ENCODE measurements at regions of chr14 and their contacts with region 1.

Region 1: DNA sequence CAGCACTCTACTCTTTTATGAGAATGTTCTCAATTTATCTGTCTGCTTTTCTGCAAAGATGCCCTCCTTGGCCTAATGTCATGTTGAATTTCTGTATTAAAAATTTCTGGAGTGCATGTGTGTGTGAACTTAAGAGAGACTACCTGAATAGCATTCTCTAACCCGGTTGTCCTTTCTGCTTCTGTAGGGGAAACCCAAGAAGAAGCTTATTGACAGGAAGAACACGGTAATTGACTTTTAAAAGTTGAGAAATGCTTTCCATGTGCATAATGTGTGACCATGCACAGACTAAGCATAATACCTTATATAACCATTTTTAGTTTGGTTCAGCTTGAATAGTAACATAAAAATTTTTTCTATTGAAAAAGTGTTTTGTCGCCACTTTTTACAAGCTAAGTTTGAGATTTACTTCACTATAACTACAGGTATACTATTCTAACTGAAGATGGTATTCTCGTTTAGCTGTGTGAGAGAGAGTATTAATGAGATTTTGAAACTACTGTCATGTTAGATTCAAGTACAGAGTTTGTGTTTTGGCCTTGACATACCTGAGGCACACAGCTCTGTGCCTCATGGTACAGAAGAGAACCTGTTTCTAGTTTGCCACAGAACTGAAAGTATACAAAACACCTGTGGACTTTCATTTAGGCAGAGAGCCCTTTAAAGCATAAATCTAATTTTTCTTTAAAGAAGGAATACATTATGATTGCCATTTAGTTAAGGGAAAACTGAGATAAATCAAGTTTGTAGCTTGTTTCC is 96.8 kb downstream of the TTLL5 start:
- DNase-seq: no peak
- ATAC-seq: 0 out of 3 replicates have a peak, but pooled peaks have one; percentile 25
- H3K4me3 ChIP-seq: no peak overlapping the region
- H3K27ac ChIP-seq: peak overlapping the region; percentile 22
- H3K4me1 ChIP-seq: peaks cover 11% of the 10 kb centered on the region; the same call in 1 of the 2 replicates
- H3K27me3 ChIP-seq: no peaks in the 10 kb centered on the region
- CTCF ChIP-seq: no peak
- EP300 ChIP-seq: no peak
- POLR2A ChIP-seq: no peak
- RAD21 ChIP-seq: no peak

Region 2: DNA sequence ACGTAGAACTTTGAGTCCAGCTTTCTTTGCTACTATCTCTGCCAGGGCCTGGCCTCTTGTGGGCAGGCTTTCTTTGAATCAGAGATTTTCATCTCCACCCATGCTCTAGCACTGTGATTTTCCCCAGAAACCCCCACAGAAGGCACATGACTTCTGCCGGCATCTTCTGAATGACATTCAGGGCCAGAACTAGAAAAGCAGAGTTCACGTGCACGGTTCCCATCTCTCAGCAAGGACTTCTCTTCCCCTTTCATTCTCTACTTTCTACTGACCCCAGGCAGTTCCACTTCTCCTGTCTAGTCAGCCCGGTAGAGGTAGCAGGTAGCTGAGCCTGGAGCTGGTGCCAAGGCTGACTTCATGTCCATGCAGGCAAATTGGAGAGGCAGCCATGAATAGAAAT is 208.7 kb before region 1 on chr14:
- CTCF ChIA-PET with region 1: no interaction called
- POLR2A ChIA-PET with region 1: no interaction called
- RAD21 ChIA-PET with region 1: no interaction called
- SMC1A ChIA-PET with region 1: no interaction called
- in situ Hi-C with region 1: no loop called
- intact Hi-C with region 1: no loop called
- DNase-seq: peak; percentile 79
- ATAC-seq: peak; percentile 87
- H3K4me3 ChIP-seq: no peak overlapping the region; the same call in 1 of the 2 replicates
- H3K27ac ChIP-seq: peak overlapping the region; percentile 53
- H3K4me1 ChIP-seq: peaks cover 23% of the 10 kb centered on the region
- H3K27me3 ChIP-seq: no peaks in the 10 kb centered on the region
- CTCF ChIP-seq: no peak
- EP300 ChIP-seq: peak in 1 of 2 experiments; percentile 49; a peak in 1 of 4 replicates
- POLR2A ChIP-seq: no peak
- RAD21 ChIP-seq: peak; percentile 7; the same call in 1 of the 2 replicates

Region 3: GRCh38 chr14:75769047-75769685 is 11.3 kb after region 1 on chr14:
- CTCF ChIA-PET with region 1: interaction called, 4 read pairs
- POLR2A ChIA-PET with region 1: interaction called, 3 read pairs
- RAD21 ChIA-PET with region 1: no interaction called
- SMC1A ChIA-PET with region 1: interaction called, 14 read pairs
- in situ Hi-C with region 1: no loop called
- intact Hi-C with region 1: no loop called
- DNase-seq: peak; percentile 19
- ATAC-seq: peak; percentile 93
- H3K4me3 ChIP-seq: no peak overlapping the region
- H3K27ac ChIP-seq: no peak overlapping the region
- H3K4me1 ChIP-seq: no peaks in the 10 kb centered on the region
- H3K27me3 ChIP-seq: no peaks in the 10 kb centered on the region
- CTCF ChIP-seq: no peak
- EP300 ChIP-seq: peak; percentile 71 to 80; a peak in 3 of 4 replicates
- POLR2A ChIP-seq: no peak
- RAD21 ChIP-seq: no peak

Measured in GM12878 (cell line).